Activated CD4-positive, alpha-beta T cell treated with anti-CD3 and anti-CD28 coated beads, Interleukin-2, amount 10 ng/mL, durations not matched to agents 24 days and 14 days (primary cell): ENCODE measurements at regions of chr2 and their contacts with region 1.

Region 1: DNA sequence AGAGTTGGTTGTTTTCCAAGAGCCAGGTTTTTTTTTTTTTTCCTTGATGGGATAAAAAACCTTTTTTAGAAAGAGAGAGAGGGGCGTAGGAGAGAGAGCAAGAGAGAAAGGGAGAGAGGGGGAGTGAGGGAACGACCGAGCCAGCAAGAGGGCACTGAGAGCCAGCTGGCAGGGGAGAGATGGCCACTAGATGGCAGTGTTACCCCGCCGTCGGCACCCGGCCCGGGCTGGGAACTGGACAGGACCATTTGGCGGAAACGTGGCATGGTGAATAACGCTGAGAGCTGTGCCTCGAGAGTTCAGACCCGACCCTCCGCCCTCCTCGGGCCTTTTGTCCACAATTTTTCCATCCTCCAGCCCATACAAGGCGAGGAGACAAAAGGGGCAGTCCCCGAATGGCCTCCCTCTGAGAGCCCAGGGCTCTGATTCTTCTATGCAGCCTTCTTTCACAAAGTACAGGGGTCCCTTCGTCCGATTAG is 286.7 kb upstream of the VRK2 start:
- DNase-seq: peak; percentile 92
- H3K4me3 Mint-ChIP-seq: no peak overlapping the region
- H3K27ac Mint-ChIP-seq: no peak overlapping the region
- H3K4me1 Mint-ChIP-seq: no peaks in the 10 kb centered on the region
- H3K27me3 Mint-ChIP-seq: no peaks in the 10 kb centered on the region

Region 2: GRCh38 chr2:58448065-58448507 is 688.2 kb after region 1 on chr2:
- intact Hi-C with region 1: loop called (anchors 5 kb)
- DNase-seq: peak; percentile 72
- H3K4me3 Mint-ChIP-seq: no peak overlapping the region
- H3K27ac Mint-ChIP-seq: no peak overlapping the region
- H3K4me1 Mint-ChIP-seq: no peaks in the 10 kb centered on the region
- H3K27me3 Mint-ChIP-seq: peaks cover 7% of the 10 kb centered on the region